ENCODE measurements at regions of chr2 and their contacts with region 1.

Region 1: GRCh38 chr2:74708883-74709282 is 54.8 kb downstream of the SEMA4F start:
- DNase-seq: no peak
- CTCF ChIP-seq: no peak

Region 2: DNA sequence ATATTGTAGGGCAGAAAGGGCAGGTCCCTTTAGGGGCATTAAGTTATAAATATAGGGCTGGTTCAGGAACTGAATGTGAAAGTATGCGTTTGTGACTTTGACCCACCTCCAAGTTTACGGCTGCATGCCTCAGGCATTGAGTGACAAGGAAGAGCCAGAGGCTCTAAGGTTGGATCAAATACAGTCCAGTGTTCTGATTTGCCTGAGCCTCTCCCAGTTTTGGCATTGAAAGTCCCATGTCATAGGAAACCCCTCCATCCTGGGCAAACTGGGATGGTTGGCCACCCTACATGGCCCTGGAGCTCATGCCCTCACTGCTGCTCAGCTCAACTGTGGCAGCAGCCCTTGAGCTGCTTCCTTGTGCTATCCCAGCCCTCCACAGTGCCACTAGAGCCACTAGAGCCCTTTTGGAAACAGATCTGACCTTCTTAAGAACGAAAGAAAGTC is 154.9 kb after region 1 on chr2:
- in situ Hi-C with region 1: no loop called
- DNase-seq: no peak
- CTCF ChIP-seq: no peak

Region 3: DNA sequence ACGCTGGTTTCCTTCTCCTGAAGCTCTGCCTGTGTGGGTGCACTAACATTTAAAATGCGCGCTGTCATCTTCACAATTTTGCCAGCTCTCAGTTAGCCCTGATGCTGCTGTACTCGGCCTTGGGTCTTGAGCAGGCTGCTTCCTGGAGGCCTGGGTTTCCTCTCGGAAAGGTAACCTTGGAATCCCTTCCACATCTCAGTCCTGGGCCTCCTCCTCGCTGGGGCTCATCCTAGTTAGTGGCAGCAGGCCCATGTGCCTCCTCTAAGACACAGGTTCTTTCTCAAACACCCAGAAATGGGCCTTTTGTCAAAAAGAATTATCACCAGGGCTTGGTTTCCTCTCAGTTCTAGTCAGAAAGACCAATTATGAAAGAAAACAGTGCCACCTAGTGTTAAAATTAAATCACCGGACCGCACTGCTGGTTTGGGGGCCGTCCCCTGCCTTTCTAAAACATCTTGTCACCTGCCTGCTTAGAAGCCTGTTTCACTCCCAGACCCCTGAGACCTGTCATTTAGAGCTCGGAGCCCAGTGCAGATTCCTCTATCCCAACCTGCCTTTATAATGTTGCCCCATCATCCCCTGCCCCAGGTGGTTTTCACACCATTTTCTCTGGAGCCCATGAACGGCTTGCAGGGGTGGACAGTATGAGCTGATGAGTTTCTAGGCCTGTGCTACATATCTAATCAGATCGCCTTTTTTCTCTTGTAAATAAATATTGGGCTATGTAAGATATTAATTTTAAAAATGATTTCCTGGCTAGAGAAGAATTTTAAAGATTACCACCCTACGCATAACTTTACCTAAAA is 167.4 kb after region 1 on chr2:
- in situ Hi-C with region 1: loop called (anchors 10 kb)
- DNase-seq: peak; percentile 84
- CTCF ChIP-seq: peak; percentile 64

Measured in GM13977 (cell line).